CD8-positive, alpha-beta T cell (primary cell): ENCODE measurements at regions of chr18 and their contacts with region 1.

Region 1: DNA sequence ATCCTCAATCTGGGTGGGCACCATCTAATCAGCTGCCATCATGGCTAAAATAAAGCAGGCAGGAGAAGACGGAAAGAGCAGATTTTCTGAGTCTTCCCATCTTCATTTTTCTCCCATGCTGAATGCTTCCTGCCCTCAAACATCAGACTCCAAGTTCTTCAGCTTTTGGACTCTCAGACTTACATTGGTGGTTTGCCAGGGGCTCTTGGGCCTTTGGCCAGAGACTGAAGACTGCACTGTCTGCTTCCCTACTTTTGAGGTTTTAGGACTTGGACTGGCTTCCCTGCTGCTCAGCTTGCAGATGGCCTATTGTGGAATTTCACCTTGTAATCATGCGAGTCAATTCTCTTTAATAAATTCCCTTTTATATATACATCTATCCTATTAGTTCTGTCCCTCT is 36.6 kb downstream of the DIPK1C start:
- DNase-seq: no peak
- ATAC-seq: no peak
- H3K4me3 ChIP-seq: no peak overlapping the region
- H3K4me3 Mint-ChIP-seq: no peak overlapping the region
- H3K27ac ChIP-seq: no peak overlapping the region
- H3K27ac Mint-ChIP-seq: no peak overlapping the region
- H3K4me1 ChIP-seq: no peaks in the 10 kb centered on the region
- H3K4me1 Mint-ChIP-seq: no peaks in the 10 kb centered on the region
- H3K27me3 ChIP-seq: peaks cover 0 to 2% of the 10 kb centered on the region in 2 experiments
- H3K27me3 Mint-ChIP-seq: no peaks in the 10 kb centered on the region
- CTCF ChIP-seq: no peak

Region 2: DNA sequence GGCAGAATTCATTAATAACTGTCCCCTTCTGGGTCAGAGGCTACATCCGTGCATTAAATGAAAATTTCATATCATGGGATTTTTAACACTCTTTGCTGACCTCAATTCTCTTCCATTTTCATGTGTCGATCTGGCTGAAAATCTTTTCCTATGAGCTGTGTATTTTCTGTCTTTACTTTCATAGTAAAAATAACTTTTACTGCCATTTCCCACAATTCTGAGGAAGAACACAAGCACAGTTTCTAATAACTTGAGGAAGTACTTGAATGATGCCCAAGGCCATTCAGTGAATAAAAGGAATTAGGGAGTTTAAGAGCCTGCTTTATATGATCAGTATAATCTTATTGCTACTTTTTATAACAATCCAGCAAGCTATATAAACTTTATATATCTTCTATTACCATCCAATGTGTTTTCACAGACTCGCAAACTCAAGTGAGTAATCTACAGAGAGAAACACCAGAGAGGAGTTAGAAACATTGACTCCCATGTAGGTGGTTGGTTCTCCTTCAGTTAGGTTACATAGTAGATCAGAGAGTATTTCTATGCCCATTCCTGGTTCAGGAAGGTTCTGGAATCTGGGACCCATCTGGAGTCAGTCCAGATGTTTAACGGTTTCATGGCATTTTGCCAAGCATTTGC is 612.8 kb before region 1 on chr18:
- CTCF ChIA-PET with region 1: no interaction called
- POLR2A ChIA-PET with region 1: no interaction called
- intact Hi-C with region 1: loop called in 1 of 2 experiments (anchors 10 kb)
- DNase-seq: no peak
- ATAC-seq: no peak
- H3K4me3 ChIP-seq: no peak overlapping the region
- H3K4me3 Mint-ChIP-seq: no peak overlapping the region
- H3K27ac ChIP-seq: no peak overlapping the region
- H3K27ac Mint-ChIP-seq: no peak overlapping the region
- H3K4me1 ChIP-seq: no peaks in the 10 kb centered on the region
- H3K4me1 Mint-ChIP-seq: no peaks in the 10 kb centered on the region
- H3K27me3 ChIP-seq: no peaks in the 10 kb centered on the region
- H3K27me3 Mint-ChIP-seq: no peaks in the 10 kb centered on the region
- CTCF ChIP-seq: no peak

Region 3: GRCh38 chr18:74378179-74378682 is 42.2 kb before region 1 on chr18:
- CTCF ChIA-PET with region 1: no interaction called
- POLR2A ChIA-PET with region 1: no interaction called
- intact Hi-C with region 1: no loop called
- DNase-seq: peak in 5 of 9 experiments; percentile 18 to 80 (median 51)
- ATAC-seq: peak; percentile 35
- H3K4me3 ChIP-seq: peak overlapping the region in 1 of 2 experiments; percentile 41
- H3K4me3 Mint-ChIP-seq: peak overlapping the region; percentile 64
- H3K27ac ChIP-seq: peak overlapping the region in 1 of 2 experiments; percentile 56
- H3K27ac Mint-ChIP-seq: peak overlapping the region; percentile 88
- H3K4me1 ChIP-seq: peaks cover 52% of the 10 kb centered on the region
- H3K4me1 Mint-ChIP-seq: peaks cover 58% of the 10 kb centered on the region
- H3K27me3 ChIP-seq: no peaks in the 10 kb centered on the region
- H3K27me3 Mint-ChIP-seq: no peaks in the 10 kb centered on the region
- CTCF ChIP-seq: no peak